SK-N-SH (cell line): ENCODE measurements at regions of chr5 and their contacts with region 1.

Region 1: GRCh38 chr5:139765409-139766217 is 30.0 kb upstream of the PSD2 start:
- DNase-seq: peak; percentile 93
- H3K4me3 ChIP-seq: peak overlapping the region; percentile 56 to 85
- H3K27ac ChIP-seq: peak overlapping the region in 1 of 2 experiments; percentile 56; a peak in 1 of 4 replicates
- H3K4me1 ChIP-seq: peaks cover 2 to 29% of the 10 kb centered on the region in 2 experiments; a peak in 3 of 4 replicates
- H3K27me3 ChIP-seq: no peaks in the 10 kb centered on the region
- CTCF ChIP-seq: peak; percentile 97
- EP300 ChIP-seq: peak in 1 of 2 experiments; percentile 14; a peak in 1 of 4 replicates
- RAD21 ChIP-seq: peak; percentile 73

Region 2: GRCh38 chr5:139560752-139561654 is 204.6 kb before region 1 on chr5 and contains the start of gene UBE2D2:
- CTCF ChIA-PET with region 1: interaction called, 10 read pairs
- POLR2A ChIA-PET with region 1: no interaction called
- DNase-seq: peak; percentile 99
- H3K4me3 ChIP-seq: peak within 1 kb of the TSS; percentile 69 to 73
- H3K27ac ChIP-seq: peak within 1 kb of the TSS; percentile 87 to 88
- H3K4me1 ChIP-seq: peaks cover 11 to 20% of the 10 kb centered on the region in 2 experiments; a peak in 3 of 4 replicates
- H3K27me3 ChIP-seq: no peaks in the 10 kb centered on the region
- CTCF ChIP-seq: no peak
- EP300 ChIP-seq: 0 out of 4 replicates have a peak, but pooled peaks of 1 of the 2 experiments have one; percentile 9
- RAD21 ChIP-seq: no peak
- polyA plus RNA-seq, gene UBE2D2: 22.8 and 24.5 TPM in 2 replicates

Region 3: DNA sequence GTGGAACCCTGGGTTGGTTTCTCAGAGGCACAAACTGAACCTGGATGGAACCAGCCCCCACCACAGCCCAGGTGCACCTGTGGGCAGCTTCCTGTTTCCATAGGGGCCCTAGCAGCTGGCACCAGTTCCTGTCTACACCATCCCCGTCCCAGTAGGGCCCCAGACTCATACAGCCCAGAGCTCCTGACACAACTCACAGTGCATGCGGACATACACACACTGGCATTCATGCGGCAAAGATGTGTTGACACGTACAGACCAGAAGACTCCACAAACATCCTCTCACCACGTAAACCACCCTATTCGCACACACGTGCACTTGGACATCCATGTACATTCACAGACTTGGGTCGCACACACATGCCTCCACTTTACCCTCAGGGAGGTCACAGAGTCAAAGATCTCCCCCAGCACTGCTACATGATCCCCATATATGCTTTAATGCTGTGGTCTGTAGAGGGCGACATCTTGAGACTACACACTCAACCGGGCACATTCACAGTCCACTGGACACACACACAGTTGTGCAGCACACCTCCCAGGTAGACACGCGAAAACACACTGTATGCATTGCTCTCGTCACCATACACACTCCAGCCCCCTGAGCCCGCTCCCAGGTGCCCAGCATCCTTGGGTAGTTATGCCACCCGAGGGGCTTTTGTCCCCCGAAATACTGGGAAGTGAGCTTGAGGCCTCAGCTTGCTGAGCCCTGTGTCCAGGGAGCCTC is 95.1 kb before region 1 on chr5:
- CTCF ChIA-PET with region 1: interaction called, 204 read pairs
- POLR2A ChIA-PET with region 1: no interaction called
- DNase-seq: peak; percentile 59
- H3K4me3 ChIP-seq: no peak overlapping the region
- H3K27ac ChIP-seq: peak overlapping the region; percentile 26 to 99; a peak in 3 of 4 replicates
- H3K4me1 ChIP-seq: peaks cover 56 to 92% of the 10 kb centered on the region in 2 experiments
- H3K27me3 ChIP-seq: no peaks in the 10 kb centered on the region
- CTCF ChIP-seq: peak; percentile 43
- EP300 ChIP-seq: no peak
- RAD21 ChIP-seq: peak; percentile 32; the same call in 1 of the 2 replicates

Region 4: DNA sequence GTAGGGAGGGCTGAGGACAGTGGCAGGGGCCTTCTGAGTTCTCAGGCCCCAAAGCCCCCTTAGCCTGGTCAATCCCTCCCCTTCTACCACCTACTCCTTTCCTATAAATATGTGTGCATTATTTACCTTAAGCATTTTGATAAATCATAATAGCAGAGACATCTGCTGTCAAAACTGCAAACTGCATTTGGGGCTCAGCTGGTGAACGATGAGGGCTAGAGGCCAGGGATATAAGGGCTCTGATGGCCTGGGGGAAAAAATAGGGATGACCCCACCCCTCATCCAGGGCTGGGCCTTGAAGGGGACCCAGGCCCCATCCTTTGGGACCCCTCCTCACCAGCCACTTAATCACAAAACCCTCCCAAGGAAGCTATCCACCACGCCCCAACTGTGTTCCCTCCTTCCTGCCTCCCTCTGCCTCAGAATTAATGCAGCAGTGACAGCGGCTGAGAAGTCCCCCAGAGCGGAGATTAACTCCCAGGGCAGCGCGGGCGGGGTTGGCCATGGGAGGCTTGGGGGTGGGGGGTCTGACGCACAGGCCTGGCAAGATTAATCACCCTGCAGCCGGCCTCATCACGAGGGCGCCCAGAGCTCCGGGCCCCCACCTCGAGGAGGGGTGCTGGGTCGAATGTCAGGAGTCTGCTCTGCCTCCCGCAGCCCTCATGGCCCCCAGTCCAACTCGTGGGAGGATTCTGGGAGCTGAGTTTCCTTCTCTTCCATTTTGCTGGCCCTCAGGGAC is 75.4 kb before region 1 on chr5:
- CTCF ChIA-PET with region 1: interaction called, 76 read pairs
- POLR2A ChIA-PET with region 1: interaction called, 3 read pairs
- DNase-seq: peak; percentile 77
- H3K4me3 ChIP-seq: no peak overlapping the region
- H3K27ac ChIP-seq: peak overlapping the region; percentile 71 to 97
- H3K4me1 ChIP-seq: peaks cover 41 to 75% of the 10 kb centered on the region in 2 experiments
- H3K27me3 ChIP-seq: no peaks in the 10 kb centered on the region
- CTCF ChIP-seq: peak; percentile 64
- EP300 ChIP-seq: peak in 1 of 2 experiments; percentile 61; a peak in 1 of 4 replicates
- RAD21 ChIP-seq: peak; percentile 76

Region 5: GRCh38 chr5:139725073-139725830 is 40.4 kb before region 1 on chr5:
- CTCF ChIA-PET with region 1: interaction called, 17 read pairs
- POLR2A ChIA-PET with region 1: no interaction called
- DNase-seq: peak; percentile 85
- H3K4me3 ChIP-seq: no peak overlapping the region
- H3K27ac ChIP-seq: peak overlapping the region; percentile 66 to 83; a peak in 3 of 4 replicates
- H3K4me1 ChIP-seq: peaks cover 12 to 17% of the 10 kb centered on the region in 2 experiments; a peak in 3 of 4 replicates
- H3K27me3 ChIP-seq: no peaks in the 10 kb centered on the region
- CTCF ChIP-seq: no peak
- EP300 ChIP-seq: peak; percentile 74 to 93
- RAD21 ChIP-seq: peak; percentile 21; the same call in 1 of the 2 replicates

Region 6: GRCh38 chr5:139740138-139740991 is 25.2 kb before region 1 on chr5:
- CTCF ChIA-PET with region 1: interaction called, 24 read pairs
- POLR2A ChIA-PET with region 1: no interaction called
- DNase-seq: no peak
- H3K4me3 ChIP-seq: no peak overlapping the region
- H3K27ac ChIP-seq: no peak overlapping the region
- H3K4me1 ChIP-seq: peaks cover 10 to 16% of the 10 kb centered on the region in 2 experiments; a peak in 2 of 4 replicates
- H3K27me3 ChIP-seq: no peaks in the 10 kb centered on the region
- CTCF ChIP-seq: no peak
- EP300 ChIP-seq: no peak
- RAD21 ChIP-seq: no peak

Region 7: GRCh38 chr5:139817362-139817761 is 51.7 kb after region 1 on chr5:
- CTCF ChIA-PET with region 1: no interaction called
- POLR2A ChIA-PET with region 1: no interaction called
- DNase-seq: no peak
- H3K4me3 ChIP-seq: no peak overlapping the region
- H3K27ac ChIP-seq: no peak overlapping the region
- H3K4me1 ChIP-seq: peaks cover 0 to 4% of the 10 kb centered on the region in 2 experiments; a peak in 1 of 4 replicates
- H3K27me3 ChIP-seq: peaks cover 4% of the 10 kb centered on the region; the same call in 1 of the 2 replicates
- CTCF ChIP-seq: no peak
- EP300 ChIP-seq: no peak
- RAD21 ChIP-seq: no peak